Posterior vena cava (tissue), 2 donors: ENCODE measurements at regions of chr18 and their contacts with region 1.

Region 1: DNA sequence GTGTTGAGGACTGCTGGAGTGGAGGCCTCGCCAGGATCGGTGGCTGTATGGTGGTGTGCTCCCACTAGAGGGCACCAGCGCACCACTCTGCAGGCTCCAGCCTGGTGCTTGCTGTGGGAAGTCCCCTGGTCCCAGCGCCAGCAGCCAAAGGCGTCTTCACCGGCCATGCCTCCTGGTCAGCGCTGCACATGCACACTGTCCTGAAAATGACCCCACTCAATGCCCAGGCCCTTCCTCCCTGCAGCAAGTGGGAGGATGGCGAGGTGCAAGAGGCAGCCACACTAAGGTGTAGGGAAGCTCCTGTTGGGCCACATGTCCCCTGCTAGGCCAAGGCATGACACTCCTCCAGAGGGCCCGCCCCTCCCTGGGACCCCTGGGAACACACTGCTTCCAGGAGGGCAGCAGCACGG is 136.5 kb downstream of the CTIF start:
- DNase-seq: peak; percentile 96

Region 2: DNA sequence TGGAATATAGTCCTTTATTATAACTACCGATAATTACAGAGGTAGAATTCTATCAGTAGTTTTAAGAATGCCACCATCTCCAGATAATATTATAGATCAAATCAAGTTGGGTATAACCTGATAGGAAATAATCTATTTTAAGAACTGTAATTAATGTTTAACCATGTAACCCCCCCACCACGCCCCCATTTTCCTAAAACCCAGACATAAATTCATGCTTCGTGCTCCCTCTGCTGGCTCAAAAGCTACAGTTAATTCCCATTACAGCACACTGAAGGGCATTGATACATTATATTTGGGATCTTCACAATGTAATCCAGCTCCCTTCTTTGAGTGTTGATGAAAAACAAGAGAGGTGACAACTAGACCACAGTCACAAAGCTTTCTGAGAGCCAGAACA is 503.4 kb after region 1 on chr18:
- intact Hi-C with region 1: loop called (anchors 5 to 10 kb)
- DNase-seq: no peak

Region 3: DNA sequence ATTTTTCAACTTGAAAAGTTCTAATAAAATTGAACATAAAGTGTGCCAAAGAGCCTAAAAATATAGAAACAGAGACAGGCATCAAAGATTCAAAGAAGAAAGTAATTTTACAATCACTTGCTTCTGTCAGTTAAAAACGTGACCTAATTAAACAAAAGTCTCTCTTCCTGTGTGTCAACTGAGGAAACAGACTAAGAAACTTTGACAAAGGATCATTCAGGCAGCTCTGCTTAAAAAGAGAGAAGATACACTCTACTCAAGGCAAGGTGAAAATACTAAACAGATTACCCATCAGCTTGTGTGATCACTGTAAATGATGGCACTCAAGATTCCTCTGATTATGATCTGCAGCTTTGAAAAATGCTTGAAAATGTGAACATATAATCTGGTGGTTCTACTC is 737.3 kb after region 1 on chr18:
- intact Hi-C with region 1: loop called in 1 of 2 experiments (anchors 10 kb)
- DNase-seq: no peak